A673 (cell line): ENCODE measurements at regions of chrX and their contacts with region 1.

Region 1: DNA sequence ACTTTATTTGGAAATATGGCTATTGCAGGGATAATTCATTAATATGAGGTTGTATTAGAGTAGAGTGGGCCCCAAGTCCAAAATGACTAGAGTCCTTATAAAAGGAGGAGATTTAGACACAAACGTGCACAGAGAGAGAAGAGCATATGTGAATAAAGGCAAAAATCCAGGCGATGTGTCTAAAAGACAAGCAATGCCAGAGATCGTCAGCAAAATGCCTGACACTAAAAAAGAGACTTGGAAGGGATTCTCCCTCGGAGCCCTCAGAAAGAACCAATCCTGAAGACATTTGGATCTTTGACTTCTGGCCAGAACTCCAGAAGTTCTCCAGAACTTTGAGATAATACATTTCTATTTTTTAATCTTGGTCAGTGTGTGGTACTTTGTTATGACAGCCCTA is 472.1 kb downstream of the NLGN4X start:
- DNase-seq: no peak
- H3K4me3 ChIP-seq: no peak overlapping the region
- H3K27ac ChIP-seq: no peak overlapping the region
- H3K4me1 ChIP-seq: peaks cover 31% of the 10 kb centered on the region
- H3K27me3 ChIP-seq: no peaks in the 10 kb centered on the region
- CTCF ChIP-seq: no peak

Region 2: GRCh38 chrX:3962511-3963311 is 1793.9 kb before region 1 on chrX:
- CTCF ChIA-PET with region 1: no interaction called
- POLR2A ChIA-PET with region 1: no interaction called
- intact Hi-C with region 1: loop called (anchors 5 kb)
- DNase-seq: peak; percentile 83
- H3K4me3 ChIP-seq: peak overlapping the region; percentile 21
- H3K27ac ChIP-seq: no peak overlapping the region
- H3K4me1 ChIP-seq: no peaks in the 10 kb centered on the region
- H3K27me3 ChIP-seq: no peaks in the 10 kb centered on the region
- CTCF ChIP-seq: peak; percentile 80

Region 3: GRCh38 chrX:5632061-5632614 is 124.5 kb before region 1 on chrX:
- CTCF ChIA-PET with region 1: no interaction called
- POLR2A ChIA-PET with region 1: no interaction called
- intact Hi-C with region 1: no loop called
- DNase-seq: no peak
- H3K4me3 ChIP-seq: no peak overlapping the region
- H3K27ac ChIP-seq: no peak overlapping the region
- H3K4me1 ChIP-seq: no peaks in the 10 kb centered on the region
- H3K27me3 ChIP-seq: no peaks in the 10 kb centered on the region
- CTCF ChIP-seq: no peak

Region 4: DNA sequence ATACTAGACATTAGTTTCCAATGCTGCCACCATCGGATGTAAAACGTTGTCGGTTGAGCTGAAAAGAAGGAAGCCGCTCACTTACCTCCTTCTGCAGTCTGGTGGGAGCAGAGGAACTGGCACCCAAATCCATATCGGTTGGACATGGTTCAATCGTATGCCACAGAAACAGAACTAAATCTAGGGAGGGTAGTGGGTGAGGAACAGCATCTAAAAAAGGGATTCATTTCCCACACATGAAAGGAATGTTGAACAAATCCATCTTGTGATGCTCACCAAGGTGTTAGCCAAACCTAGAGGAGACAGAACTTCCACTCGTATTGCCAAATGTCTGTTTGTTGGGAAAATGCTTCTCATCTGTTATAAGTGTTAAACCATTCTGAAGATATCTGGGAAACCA is 60.6 kb before region 1 on chrX:
- CTCF ChIA-PET with region 1: no interaction called
- POLR2A ChIA-PET with region 1: no interaction called
- intact Hi-C with region 1: no loop called
- DNase-seq: no peak
- H3K4me3 ChIP-seq: no peak overlapping the region
- H3K27ac ChIP-seq: no peak overlapping the region
- H3K4me1 ChIP-seq: no peaks in the 10 kb centered on the region
- H3K27me3 ChIP-seq: no peaks in the 10 kb centered on the region
- CTCF ChIP-seq: no peak

Region 5: DNA sequence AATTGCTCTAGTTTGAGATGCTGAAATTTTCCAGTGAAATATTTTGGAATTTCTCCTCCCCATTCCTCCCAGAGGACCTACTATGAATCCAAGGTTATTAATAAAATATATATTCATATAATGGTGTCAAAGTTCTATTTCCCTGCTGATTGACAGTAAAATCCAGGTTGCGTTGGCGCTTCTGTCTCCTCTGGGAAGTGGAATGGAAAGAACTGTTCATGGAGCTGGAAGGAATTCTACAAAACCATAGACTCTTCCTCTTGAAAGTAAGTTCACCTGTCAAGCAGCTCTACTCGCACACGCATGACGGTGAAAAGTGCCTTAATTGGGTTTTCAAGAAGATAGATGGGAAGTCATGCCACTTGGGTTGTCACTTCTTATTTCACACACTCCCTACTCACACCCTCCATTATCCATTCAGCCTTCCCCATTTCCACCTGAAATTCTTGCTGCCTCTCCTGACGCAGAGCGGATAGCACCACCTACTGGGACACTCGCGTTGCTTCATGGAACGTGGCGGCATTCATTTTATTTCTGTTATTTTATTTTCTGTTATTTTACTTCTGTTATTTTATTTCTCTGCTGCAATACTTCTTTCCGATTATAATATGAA is 120.5 kb after region 1 on chrX:
- CTCF ChIA-PET with region 1: no interaction called
- POLR2A ChIA-PET with region 1: no interaction called
- intact Hi-C with region 1: loop called (anchors 1 kb)
- DNase-seq: peak; percentile 82
- H3K4me3 ChIP-seq: no peak overlapping the region
- H3K27ac ChIP-seq: peak overlapping the region; percentile 45
- H3K4me1 ChIP-seq: peaks cover 25% of the 10 kb centered on the region
- H3K27me3 ChIP-seq: no peaks in the 10 kb centered on the region
- CTCF ChIP-seq: peak; percentile 86

Region 6: DNA sequence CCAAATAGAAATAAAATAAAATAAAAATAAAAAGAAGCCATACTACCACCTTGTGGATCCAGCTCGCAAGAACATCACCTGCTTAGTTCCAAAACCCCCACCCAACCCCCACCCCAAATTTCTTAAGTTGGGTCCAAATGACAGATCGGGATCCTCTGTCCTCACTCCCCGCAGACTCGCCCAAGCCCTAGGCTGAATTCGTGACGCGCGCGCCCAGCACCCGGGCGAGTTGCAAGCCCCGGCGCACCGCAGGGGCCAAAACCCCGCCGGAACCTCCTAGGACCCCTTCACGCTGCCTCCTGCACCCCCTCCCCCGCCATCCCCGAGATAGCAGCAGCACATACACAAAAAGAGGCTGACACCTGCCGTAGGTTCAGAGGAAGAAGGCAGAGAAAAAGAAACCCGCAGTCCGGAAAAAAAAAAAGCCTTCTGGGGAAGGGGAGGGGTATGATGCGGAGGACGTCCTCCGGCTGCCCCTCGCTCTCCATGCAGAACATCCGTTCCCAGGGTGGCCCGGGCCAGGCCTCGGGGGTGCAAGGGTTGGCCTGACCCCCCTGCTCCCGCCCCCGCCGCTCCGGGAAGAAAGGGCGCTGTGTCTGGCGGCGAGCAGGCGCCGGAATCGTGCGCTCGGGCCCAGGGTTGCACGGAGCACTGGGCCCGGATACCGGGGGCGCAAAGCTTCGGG is 469.4 kb after region 1 on chrX:
- CTCF ChIA-PET with region 1: no interaction called
- POLR2A ChIA-PET with region 1: no interaction called
- intact Hi-C with region 1: loop called (anchors 2 kb)
- DNase-seq: peak; percentile 69
- H3K4me3 ChIP-seq: peak overlapping the region; percentile 95
- H3K27ac ChIP-seq: peak overlapping the region; percentile 88
- H3K4me1 ChIP-seq: peaks cover 14% of the 10 kb centered on the region
- H3K27me3 ChIP-seq: peaks cover 3% of the 10 kb centered on the region
- CTCF ChIP-seq: peak; percentile 50; the same call in 1 of the 2 replicates

Region 7: DNA sequence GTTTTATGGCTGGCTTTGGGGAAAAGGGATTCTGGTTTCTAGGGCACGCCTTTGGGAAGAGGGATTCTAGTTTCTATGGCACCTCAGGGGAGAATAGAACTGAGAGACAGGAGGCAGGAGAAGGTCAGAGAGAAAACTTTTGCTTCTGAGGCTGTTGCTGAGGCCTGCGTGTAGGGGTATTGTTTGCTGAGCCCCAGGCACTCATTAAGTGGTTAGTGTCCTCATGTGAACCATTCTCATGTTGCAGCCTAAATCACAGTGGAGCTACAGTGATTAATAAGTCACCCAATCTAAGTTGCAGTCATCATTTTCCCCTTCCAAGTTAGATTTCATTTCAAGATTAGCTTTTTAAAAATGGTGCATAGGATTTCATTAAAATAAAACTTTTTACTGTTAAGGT is 749.3 kb after region 1 on chrX:
- CTCF ChIA-PET with region 1: no interaction called
- POLR2A ChIA-PET with region 1: no interaction called
- intact Hi-C with region 1: loop called (anchors 10 kb)
- DNase-seq: peak; percentile 32
- H3K4me3 ChIP-seq: no peak overlapping the region
- H3K27ac ChIP-seq: peak overlapping the region; percentile 6
- H3K4me1 ChIP-seq: peaks cover 5% of the 10 kb centered on the region
- H3K27me3 ChIP-seq: no peaks in the 10 kb centered on the region
- CTCF ChIP-seq: no peak